Activated CD4-positive, alpha-beta memory T cell treated with anti-CD3 and anti-CD28 coated beads, Interleukin-2, amount 10 ng/mL, durations not matched to agents 7 days and 5 days (primary cell): ENCODE measurements at regions of chr11 and their contacts with region 1.

Region 1: DNA sequence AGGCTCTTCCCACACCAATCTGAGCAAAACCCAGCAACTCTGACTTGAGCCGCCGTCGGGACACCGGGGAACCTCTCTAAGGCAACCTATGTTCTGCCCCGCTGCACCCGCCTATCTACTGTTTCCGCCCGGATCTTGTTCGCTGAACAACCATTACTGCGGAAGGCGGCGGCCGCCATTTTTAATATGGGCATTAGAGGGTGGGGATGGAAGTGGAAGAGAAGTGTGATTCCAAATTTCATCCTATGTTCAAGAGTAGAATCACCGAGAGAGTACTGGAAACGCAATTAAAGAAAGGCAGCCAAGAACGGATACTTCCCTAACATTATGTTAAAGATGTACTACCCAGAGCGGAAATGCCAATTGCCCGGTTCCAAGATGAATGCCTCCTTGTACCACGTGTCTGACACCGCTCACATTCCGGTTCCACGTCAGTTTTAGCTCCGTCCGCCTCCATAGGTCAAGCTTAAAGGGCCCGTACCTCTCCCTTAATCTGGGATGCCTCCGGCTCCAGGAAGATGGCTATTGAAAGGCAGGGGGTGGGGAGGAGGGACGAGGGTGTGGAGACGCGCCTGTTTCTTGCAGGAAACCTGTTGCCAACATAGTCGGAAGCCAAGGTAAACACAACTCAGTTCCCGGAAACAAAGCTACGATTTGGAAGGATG is at the start of gene DPAGT1:
- DNase-seq: peak; percentile 89
- H3K4me3 Mint-ChIP-seq: peak within 1 kb of the TSS; percentile 92
- H3K27ac Mint-ChIP-seq: peak within 1 kb of the TSS; percentile 99
- H3K4me1 Mint-ChIP-seq: peaks cover 56% of the 10 kb centered on the region
- H3K27me3 Mint-ChIP-seq: no peaks in the 10 kb centered on the region
- total RNA-seq, gene DPAGT1: 57.3 to 58.4 TPM

Region 2: GRCh38 chr11:119018074-119018938 is 83.6 kb before region 1 on chr11 and contains the starts of genes RPS25 and TRAPPC4:
- CTCF ChIA-PET with region 1: interaction called, 6 read pairs
- POLR2A ChIA-PET with region 1: interaction called, 21 read pairs
- DNase-seq: peak; percentile 96
- H3K4me3 Mint-ChIP-seq: peak within 1 kb of the TSS; percentile 90
- H3K27ac Mint-ChIP-seq: peak within 1 kb of the TSS; percentile 100
- H3K4me1 Mint-ChIP-seq: peaks cover 56% of the 10 kb centered on the region
- H3K27me3 Mint-ChIP-seq: no peaks in the 10 kb centered on the region
- total RNA-seq, gene RPS25: 1,257 to 1,287 TPM
- total RNA-seq, gene TRAPPC4: 67.0 to 71.1 TPM

Region 3: GRCh38 chr11:119084663-119085436 is 17.0 kb before region 1 on chr11 and contains the start of gene HMBS:
- CTCF ChIA-PET with region 1: interaction called, 15 read pairs
- POLR2A ChIA-PET with region 1: interaction called, 121 read pairs
- DNase-seq: peak; percentile 89
- H3K4me3 Mint-ChIP-seq: peak within 1 kb of the TSS; percentile 98
- H3K27ac Mint-ChIP-seq: peak within 1 kb of the TSS; percentile 91
- H3K4me1 Mint-ChIP-seq: peaks cover 47% of the 10 kb centered on the region
- H3K27me3 Mint-ChIP-seq: no peaks in the 10 kb centered on the region
- total RNA-seq, gene HMBS: 17.3 to 18.8 TPM

Region 4: DNA sequence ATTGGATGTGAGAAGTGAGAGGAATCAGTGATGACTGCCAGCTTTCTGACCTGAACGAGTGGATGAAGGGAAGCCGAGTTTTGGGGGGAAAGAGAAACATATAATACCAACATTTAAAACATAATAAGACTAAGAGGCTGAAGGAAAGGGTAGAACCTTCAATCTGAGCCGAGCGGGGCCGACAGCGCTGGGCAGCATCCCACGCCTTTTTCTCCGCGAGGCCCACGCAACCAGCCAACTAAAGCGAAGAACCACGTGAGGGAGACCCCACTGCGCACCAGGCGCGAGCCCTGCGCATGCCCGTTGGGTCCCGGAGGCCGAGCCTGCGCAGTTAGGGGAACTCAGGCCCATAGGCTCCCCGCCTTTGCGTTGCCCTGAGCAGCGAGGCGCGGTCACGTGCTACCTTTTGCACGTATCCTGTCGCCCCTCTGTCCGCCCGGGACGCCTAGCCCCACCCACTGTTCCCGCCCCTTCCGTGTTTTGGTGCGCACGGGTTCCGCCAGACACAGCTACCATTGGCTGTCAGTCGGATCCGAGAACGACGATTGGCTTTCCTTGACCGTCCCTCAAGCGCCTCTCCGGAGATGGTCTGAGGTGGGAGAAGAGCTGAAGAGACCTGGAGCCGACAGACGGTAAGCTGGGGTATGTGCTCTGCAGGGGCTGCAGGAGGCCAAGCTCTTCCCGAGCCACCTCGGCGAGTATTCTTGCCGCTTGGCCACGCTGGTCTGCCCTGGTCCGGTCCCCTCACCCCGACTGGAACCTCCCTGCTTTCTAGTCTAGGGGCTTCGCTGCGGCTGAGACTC is 19.3 kb after region 1 on chr11 and contains the start of gene HINFP:
- CTCF ChIA-PET with region 1: interaction called, 7 read pairs
- POLR2A ChIA-PET with region 1: interaction called, 108 read pairs
- DNase-seq: peak; percentile 100
- H3K4me3 Mint-ChIP-seq: peak within 1 kb of the TSS; percentile 93
- H3K27ac Mint-ChIP-seq: peak within 1 kb of the TSS; percentile 76
- H3K4me1 Mint-ChIP-seq: peaks cover 29% of the 10 kb centered on the region
- H3K27me3 Mint-ChIP-seq: no peaks in the 10 kb centered on the region
- total RNA-seq, gene HINFP: 36.6 to 36.7 TPM